ENCODE measurements at regions of chr7 and their contacts with region 1.

Region 1: GRCh38 chr7:37448636-37449361 is at the start of gene ELMO1:
- DNase-seq: peak; percentile 72 to 90
- ATAC-seq: peak; percentile 73 to 87 (median 82)
- H3K4me3 ChIP-seq: peak within 1 kb of the TSS; percentile 97
- H3K4me3 Mint-ChIP-seq: peak within 1 kb of the TSS; percentile 100
- H3K27ac ChIP-seq: peak within 1 kb of the TSS; percentile 85
- H3K27ac Mint-ChIP-seq: peak within 1 kb of the TSS; percentile 95 to 100
- H3K4me1 ChIP-seq: peaks cover 22% of the 10 kb centered on the region
- H3K4me1 Mint-ChIP-seq: peaks cover 65 to 70% of the 10 kb centered on the region in 2 donors
- H3K27me3 ChIP-seq: no peaks in the 10 kb centered on the region
- H3K27me3 Mint-ChIP-seq: peaks cover 7 to 10% of the 10 kb centered on the region in 2 donors
- CTCF ChIP-seq: peak; percentile 55
- total RNA-seq, gene ELMO1: 127 to 147 (median 130) TPM

Region 2: DNA sequence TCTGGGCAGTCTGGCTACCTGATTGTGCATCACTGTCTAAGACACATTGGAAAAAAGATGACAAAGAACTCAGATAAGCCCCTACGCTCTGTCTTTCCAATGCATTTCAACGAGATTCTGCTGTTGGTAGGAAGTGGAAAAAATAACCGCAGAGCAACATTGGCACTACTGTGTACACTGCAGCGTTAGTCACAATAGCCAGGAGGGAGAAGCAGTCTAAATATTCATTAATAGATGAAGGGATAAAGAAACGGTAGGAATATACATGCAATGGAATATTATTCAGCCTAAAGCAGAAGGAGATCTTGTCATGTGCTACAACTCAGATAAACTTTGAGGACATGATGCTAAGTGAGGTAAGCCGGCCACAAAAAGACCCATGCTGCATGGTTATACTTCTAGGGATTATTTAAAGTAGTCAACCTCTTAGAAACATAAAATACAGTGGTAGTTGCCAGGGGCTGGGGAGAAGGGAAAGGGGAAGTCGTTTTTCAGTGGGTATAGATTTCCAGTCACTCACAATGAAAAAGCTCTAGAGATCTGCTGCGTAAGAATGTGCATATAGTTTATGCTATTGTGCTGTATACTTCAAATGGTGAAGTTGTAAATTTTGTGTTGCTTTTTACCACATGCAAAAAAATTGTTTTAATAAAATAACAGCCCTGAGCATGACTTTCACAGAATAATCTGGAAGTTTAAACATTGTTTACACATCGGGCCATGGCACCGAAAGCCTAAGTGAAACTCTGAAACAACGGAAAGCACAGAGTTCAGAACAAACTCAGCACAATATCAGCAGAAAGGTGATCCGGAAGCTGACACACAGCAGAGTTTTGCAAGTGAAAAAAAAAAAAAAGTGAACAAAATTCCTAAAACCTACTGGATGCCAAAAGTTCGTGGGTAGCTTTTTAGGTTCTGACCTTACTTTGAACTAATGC is 40.2 kb before region 1 on chr7:
- intact Hi-C with region 1: loop called (anchors 5 kb)
- DNase-seq: peak in 1 of 2 donors; percentile 53
- ATAC-seq: peak; percentile 39 to 58 (median 48)
- H3K4me3 ChIP-seq: peak overlapping the region; percentile 3
- H3K4me3 Mint-ChIP-seq: peak overlapping the region; percentile 45
- H3K27ac ChIP-seq: no peak overlapping the region
- H3K27ac Mint-ChIP-seq: peak overlapping the region; percentile 22 to 42
- H3K4me1 ChIP-seq: peaks cover 5% of the 10 kb centered on the region
- H3K4me1 Mint-ChIP-seq: peaks cover 69 to 72% of the 10 kb centered on the region in 2 donors
- H3K27me3 ChIP-seq: no peaks in the 10 kb centered on the region
- H3K27me3 Mint-ChIP-seq: no peaks in the 10 kb centered on the region
- CTCF ChIP-seq: no peak

Region 3: GRCh38 chr7:37433166-37433565 is 15.6 kb before region 1 on chr7:
- intact Hi-C with region 1: loop called (anchors 2 kb)
- DNase-seq: peak in 1 of 2 donors; percentile 29
- ATAC-seq: peak in 2 of 3 donors; percentile 27 to 42
- H3K4me3 ChIP-seq: no peak overlapping the region
- H3K4me3 Mint-ChIP-seq: peak overlapping the region; percentile 6
- H3K27ac ChIP-seq: no peak overlapping the region
- H3K27ac Mint-ChIP-seq: peak overlapping the region in 1 of 2 donors; percentile 62
- H3K4me1 ChIP-seq: peaks cover 13% of the 10 kb centered on the region
- H3K4me1 Mint-ChIP-seq: peaks cover 64 to 65% of the 10 kb centered on the region in 2 donors
- H3K27me3 ChIP-seq: no peaks in the 10 kb centered on the region
- H3K27me3 Mint-ChIP-seq: no peaks in the 10 kb centered on the region
- CTCF ChIP-seq: no peak

Region 4: DNA sequence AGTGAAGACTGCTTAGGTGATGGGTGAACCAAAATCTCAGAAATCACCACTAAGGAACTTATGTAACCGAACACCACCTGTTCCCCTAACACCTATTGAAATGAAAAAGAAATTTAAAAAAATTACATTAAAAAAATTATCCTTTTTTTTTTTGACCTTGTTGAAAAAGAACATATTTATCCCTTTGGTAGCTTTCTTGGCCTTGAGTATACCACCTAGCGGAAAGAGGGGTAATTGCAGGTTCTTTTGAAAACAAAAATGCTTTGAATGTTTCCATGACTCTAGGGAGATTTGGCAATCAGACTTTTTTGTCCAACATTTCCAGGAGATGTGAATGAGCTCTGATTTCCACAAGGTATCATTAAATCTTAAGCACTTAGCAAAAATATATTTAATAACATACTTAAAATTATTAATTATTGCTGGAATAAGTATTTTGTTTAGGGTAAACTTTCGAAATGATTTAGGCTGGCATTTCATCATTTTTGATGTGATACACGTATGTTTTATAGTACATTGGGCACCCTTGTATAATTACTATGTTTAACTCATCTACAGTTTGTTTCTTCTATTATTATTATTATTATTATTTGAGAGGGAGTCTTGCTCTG is 46.9 kb after region 1 on chr7:
- intact Hi-C with region 1: no loop called
- DNase-seq: peak in 1 of 2 donors; percentile 60
- ATAC-seq: peak in 2 of 3 donors; percentile 40 to 51
- H3K4me3 ChIP-seq: no peak overlapping the region
- H3K4me3 Mint-ChIP-seq: no peak overlapping the region
- H3K27ac ChIP-seq: no peak overlapping the region
- H3K27ac Mint-ChIP-seq: no peak overlapping the region
- H3K4me1 ChIP-seq: no peaks in the 10 kb centered on the region
- H3K4me1 Mint-ChIP-seq: no peaks in the 10 kb centered on the region
- H3K27me3 ChIP-seq: no peaks in the 10 kb centered on the region
- H3K27me3 Mint-ChIP-seq: no peaks in the 10 kb centered on the region
- CTCF ChIP-seq: peak; percentile 94

Measured in natural killer cell (primary cell).